ENCODE measurements at regions of chr17 and their contacts with region 1.

Region 1: GRCh38 chr17:8954339-8954738 is 11.2 kb downstream of the PIK3R5 start:
- DNase-seq: no peak
- ATAC-seq: peak; percentile 72
- H3K4me3 ChIP-seq: no peak overlapping the region
- H3K27ac ChIP-seq: peak overlapping the region; percentile 81
- H3K4me1 ChIP-seq: peaks cover 85% of the 10 kb centered on the region
- H3K27me3 ChIP-seq: no peaks in the 10 kb centered on the region
- CTCF ChIP-seq: no peak
- EP300 ChIP-seq: peak; percentile 9 to 27; a peak in 1 of 4 replicates
- POLR2A ChIP-seq: peak; percentile 31; the same call in 1 of the 2 replicates
- RAD21 ChIP-seq: no peak

Region 2: DNA sequence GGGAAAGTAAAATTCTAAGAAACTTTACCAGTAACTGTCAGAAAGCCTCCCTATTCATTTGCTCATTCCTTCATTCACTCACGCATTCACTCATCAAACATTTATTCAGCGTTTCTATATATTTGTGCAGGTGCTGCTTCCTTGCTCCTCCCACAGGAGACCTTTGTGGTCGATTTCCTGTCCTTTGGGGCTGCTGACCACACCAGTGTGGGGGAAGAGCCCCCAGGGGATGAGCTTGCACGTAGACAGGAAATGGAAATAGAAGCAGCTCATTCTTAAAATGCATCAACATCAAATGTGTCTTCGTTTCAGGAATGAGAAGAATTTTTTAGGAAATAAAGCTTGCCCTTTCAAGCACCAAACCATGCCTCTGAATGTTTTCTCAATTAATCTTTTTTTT is 96.4 kb before region 1 on chr17:
- CTCF ChIA-PET with region 1: interaction called, 4 read pairs
- POLR2A ChIA-PET with region 1: interaction called, 10 read pairs
- RAD21 ChIA-PET with region 1: interaction called, 9 read pairs
- SMC1A ChIA-PET with region 1: interaction called, 5 read pairs
- in situ Hi-C with region 1: loop called (anchors 5 kb)
- intact Hi-C with region 1: loop called (anchors 5 kb)
- DNase-seq: peak; percentile 95
- ATAC-seq: peak; percentile 40
- H3K4me3 ChIP-seq: peak overlapping the region; percentile 57; the same call in 1 of the 2 replicates
- H3K27ac ChIP-seq: peak overlapping the region; percentile 99
- H3K4me1 ChIP-seq: peaks cover 60% of the 10 kb centered on the region
- H3K27me3 ChIP-seq: no peaks in the 10 kb centered on the region
- CTCF ChIP-seq: no peak
- EP300 ChIP-seq: peak; percentile 98 to 99
- POLR2A ChIP-seq: no peak
- RAD21 ChIP-seq: peak; percentile 12; the same call in 1 of the 2 replicates

Region 3: DNA sequence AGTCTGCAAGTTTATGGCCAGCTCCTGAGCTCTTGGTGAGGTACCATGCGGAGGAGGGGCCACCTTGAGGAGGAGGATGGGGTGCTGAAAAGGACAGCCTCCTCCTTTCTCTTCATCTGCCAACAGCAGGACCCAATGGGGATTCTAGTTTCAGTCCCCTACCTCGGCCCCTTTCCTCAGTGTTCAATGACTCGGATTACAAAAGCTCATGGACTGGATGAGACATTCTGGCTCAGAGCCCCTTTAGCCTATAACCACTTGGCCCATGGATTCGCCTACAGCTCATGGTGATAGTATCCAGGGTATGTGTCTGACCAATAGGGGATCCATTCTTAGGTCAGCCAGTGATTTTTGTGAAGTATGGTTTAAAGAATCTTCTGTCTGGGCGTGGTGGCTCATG is 78.4 kb before region 1 on chr17:
- CTCF ChIA-PET with region 1: no interaction called
- POLR2A ChIA-PET with region 1: no interaction called
- RAD21 ChIA-PET with region 1: no interaction called
- SMC1A ChIA-PET with region 1: no interaction called
- in situ Hi-C with region 1: no loop called
- intact Hi-C with region 1: no loop called
- DNase-seq: no peak
- ATAC-seq: peak; percentile 40
- H3K4me3 ChIP-seq: no peak overlapping the region
- H3K27ac ChIP-seq: no peak overlapping the region
- H3K4me1 ChIP-seq: peaks cover 12% of the 10 kb centered on the region
- H3K27me3 ChIP-seq: no peaks in the 10 kb centered on the region
- CTCF ChIP-seq: no peak
- EP300 ChIP-seq: no peak
- POLR2A ChIP-seq: no peak
- RAD21 ChIP-seq: no peak

Region 4: DNA sequence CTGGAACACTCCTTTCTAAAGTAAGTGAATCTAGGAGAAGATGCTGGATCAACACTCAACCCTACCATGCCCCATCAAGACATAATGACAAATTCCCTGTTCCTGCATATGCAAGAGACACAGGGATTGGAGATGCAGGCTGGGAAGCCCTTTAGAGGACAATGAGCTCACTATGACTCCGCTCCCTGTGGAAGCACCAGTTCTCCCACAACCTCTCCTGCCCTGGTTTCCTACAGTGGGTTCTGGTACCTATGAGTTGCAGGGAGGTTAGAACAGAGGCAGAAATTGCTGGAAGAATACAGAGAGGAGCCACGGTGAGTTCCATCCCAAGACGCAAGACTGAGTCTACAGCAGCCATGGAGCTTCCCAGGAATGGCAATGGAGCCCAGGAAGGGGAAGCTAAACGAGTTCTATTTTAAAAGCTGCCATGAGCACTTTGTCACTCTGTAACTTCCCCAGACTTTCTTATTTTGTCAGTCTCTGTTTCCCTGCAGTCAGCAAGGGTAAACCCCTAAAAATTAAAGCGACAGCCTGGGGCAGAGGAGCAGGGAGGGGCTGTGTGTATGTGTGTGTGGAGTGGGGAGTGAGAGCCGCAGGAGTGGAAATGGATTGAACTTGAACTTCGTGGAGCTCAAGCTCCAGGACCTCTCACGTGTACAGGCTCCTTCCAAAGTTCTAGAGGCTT is 44.6 kb before region 1 on chr17:
- CTCF ChIA-PET with region 1: no interaction called
- POLR2A ChIA-PET with region 1: no interaction called
- RAD21 ChIA-PET with region 1: interaction called, 3 read pairs
- SMC1A ChIA-PET with region 1: interaction called, 10 read pairs
- in situ Hi-C with region 1: no loop called
- intact Hi-C with region 1: no loop called
- DNase-seq: no peak
- ATAC-seq: peak; percentile 28; the same call in 2 of the 3 replicates
- H3K4me3 ChIP-seq: no peak overlapping the region
- H3K27ac ChIP-seq: no peak overlapping the region
- H3K4me1 ChIP-seq: peaks cover 21% of the 10 kb centered on the region
- H3K27me3 ChIP-seq: no peaks in the 10 kb centered on the region
- CTCF ChIP-seq: no peak
- EP300 ChIP-seq: no peak
- POLR2A ChIP-seq: no peak
- RAD21 ChIP-seq: no peak

Region 5: GRCh38 chr17:8916466-8916865 is 37.9 kb before region 1 on chr17:
- CTCF ChIA-PET with region 1: interaction called, 7 read pairs
- POLR2A ChIA-PET with region 1: interaction called, 6 read pairs
- RAD21 ChIA-PET with region 1: interaction called, 3 read pairs
- SMC1A ChIA-PET with region 1: interaction called, 10 read pairs
- in situ Hi-C with region 1: no loop called
- intact Hi-C with region 1: loop called (anchors 5 kb)
- DNase-seq: no peak
- ATAC-seq: no peak
- H3K4me3 ChIP-seq: no peak overlapping the region
- H3K27ac ChIP-seq: no peak overlapping the region
- H3K4me1 ChIP-seq: peaks cover 49% of the 10 kb centered on the region
- H3K27me3 ChIP-seq: no peaks in the 10 kb centered on the region
- CTCF ChIP-seq: no peak
- EP300 ChIP-seq: no peak
- POLR2A ChIP-seq: no peak
- RAD21 ChIP-seq: no peak

Region 6: GRCh38 chr17:8922451-8922850 is 31.9 kb before region 1 on chr17:
- CTCF ChIA-PET with region 1: interaction called, 7 read pairs
- POLR2A ChIA-PET with region 1: interaction called, 9 read pairs
- RAD21 ChIA-PET with region 1: interaction called, 9 read pairs
- SMC1A ChIA-PET with region 1: interaction called, 10 read pairs
- in situ Hi-C with region 1: no loop called
- intact Hi-C with region 1: loop called (anchors 5 kb)
- DNase-seq: no peak
- ATAC-seq: no peak
- H3K4me3 ChIP-seq: no peak overlapping the region
- H3K27ac ChIP-seq: no peak overlapping the region
- H3K4me1 ChIP-seq: peaks cover 50% of the 10 kb centered on the region
- H3K27me3 ChIP-seq: no peaks in the 10 kb centered on the region
- CTCF ChIP-seq: no peak
- EP300 ChIP-seq: no peak
- POLR2A ChIP-seq: no peak
- RAD21 ChIP-seq: no peak

Region 7: DNA sequence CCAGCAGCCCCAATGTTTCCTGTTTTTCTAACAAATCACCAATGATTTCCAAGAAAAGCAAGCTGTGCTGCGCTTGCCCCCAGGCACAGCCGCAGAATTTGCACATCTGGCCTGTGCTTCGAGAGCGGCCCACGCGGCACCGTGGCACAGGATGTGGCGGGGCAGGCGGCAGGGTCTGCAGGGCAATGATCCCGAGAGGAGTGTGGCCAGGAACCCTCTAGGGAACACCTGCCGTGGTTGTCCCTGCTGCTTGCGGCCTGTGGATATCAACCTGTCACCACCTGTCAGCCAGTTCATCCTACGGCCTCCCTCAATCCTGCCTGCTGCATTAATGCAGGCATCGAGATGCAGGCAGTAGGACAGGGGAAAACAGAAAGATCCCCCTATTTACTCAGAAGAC is 12.8 kb before region 1 on chr17:
- CTCF ChIA-PET with region 1: interaction called, 35 read pairs
- POLR2A ChIA-PET with region 1: interaction called, 73 read pairs
- RAD21 ChIA-PET with region 1: interaction called, 122 read pairs
- SMC1A ChIA-PET with region 1: interaction called, 345 read pairs
- in situ Hi-C with region 1: no loop called
- intact Hi-C with region 1: loop called (anchors 2 kb)
- DNase-seq: no peak
- ATAC-seq: peak; percentile 68
- H3K4me3 ChIP-seq: peak overlapping the region; percentile 15; the same call in 1 of the 2 replicates
- H3K27ac ChIP-seq: peak overlapping the region; percentile 94
- H3K4me1 ChIP-seq: peaks cover 45% of the 10 kb centered on the region
- H3K27me3 ChIP-seq: no peaks in the 10 kb centered on the region
- CTCF ChIP-seq: no peak
- EP300 ChIP-seq: peak; percentile 61 to 82
- POLR2A ChIP-seq: 0 out of 2 replicates have a peak, but pooled peaks have one; percentile 13
- RAD21 ChIP-seq: no peak

Region 8: GRCh38 chr17:8991514-8992285 is 37.4 kb after region 1 on chr17:
- CTCF ChIA-PET with region 1: interaction called, 44 read pairs
- POLR2A ChIA-PET with region 1: interaction called, 9 read pairs
- RAD21 ChIA-PET with region 1: interaction called, 10 read pairs
- SMC1A ChIA-PET with region 1: interaction called, 5 read pairs
- in situ Hi-C with region 1: no loop called
- intact Hi-C with region 1: loop called (anchors 5 kb)
- DNase-seq: no peak
- ATAC-seq: peak; percentile 74
- H3K4me3 ChIP-seq: no peak overlapping the region
- H3K27ac ChIP-seq: no peak overlapping the region
- H3K4me1 ChIP-seq: peaks cover 12% of the 10 kb centered on the region
- H3K27me3 ChIP-seq: no peaks in the 10 kb centered on the region
- CTCF ChIP-seq: peak; percentile 38 to 77 (median 71)
- EP300 ChIP-seq: no peak
- POLR2A ChIP-seq: no peak
- RAD21 ChIP-seq: peak; percentile 57